ENCODE measurements at regions of chr15 and their contacts with region 1.

Region 1: GRCh38 chr15:94238539-94239118 is 7.3 kb downstream of the MCTP2 start:
- DNase-seq: no peak
- H3K4me3 Mint-ChIP-seq: peak overlapping the region; percentile 43
- H3K27ac Mint-ChIP-seq: peak overlapping the region; percentile 86
- H3K4me1 Mint-ChIP-seq: peaks cover 46% of the 10 kb centered on the region
- H3K27me3 Mint-ChIP-seq: no peaks in the 10 kb centered on the region
- CTCF ChIP-seq: no peak

Region 2: DNA sequence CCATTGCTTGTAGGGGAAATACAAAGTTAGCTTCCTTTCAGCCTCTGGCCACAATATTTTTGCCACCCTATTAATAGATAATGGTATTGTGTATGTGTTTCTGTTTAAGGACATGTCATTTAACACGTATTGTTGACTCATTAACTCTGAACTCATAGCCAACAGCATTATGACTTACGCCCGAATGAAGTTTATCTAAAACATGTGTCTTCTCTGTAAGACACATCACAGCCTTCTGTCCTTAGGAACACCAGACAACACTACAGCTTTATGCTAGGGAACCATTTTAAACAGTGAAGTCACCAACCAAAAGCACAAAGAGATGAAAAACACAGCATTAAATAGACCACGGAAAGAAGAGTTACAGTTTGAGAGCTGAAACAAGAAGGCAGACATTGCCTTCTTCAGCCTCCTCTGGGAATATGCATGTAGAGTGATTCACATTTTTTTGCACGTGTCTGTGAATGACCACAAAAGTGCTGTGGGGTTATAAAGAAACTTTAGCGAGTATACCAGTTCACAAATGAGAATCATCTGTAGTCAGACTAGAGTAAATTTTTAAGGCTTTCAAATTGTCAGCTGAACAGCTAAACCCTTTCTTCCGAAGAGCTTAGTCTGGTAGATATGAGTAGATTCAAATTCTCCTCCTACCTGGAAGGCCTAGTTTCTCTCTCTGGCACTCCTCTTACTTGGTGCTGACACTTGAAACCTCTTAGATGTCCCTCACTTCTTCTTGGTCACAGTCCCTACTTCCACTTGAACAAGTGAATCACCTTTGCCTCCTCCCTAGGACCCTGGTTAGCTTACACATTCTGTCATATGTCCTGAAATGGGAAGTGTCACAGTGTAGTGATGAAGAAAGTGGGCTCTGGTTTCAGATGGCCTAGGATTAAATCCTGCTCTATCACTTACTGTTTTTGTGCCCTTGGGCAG is 25.0 kb after region 1 on chr15:
- CTCF ChIA-PET with region 1: interaction called, 3 read pairs
- POLR2A ChIA-PET with region 1: interaction called, 28 read pairs
- intact Hi-C with region 1: no loop called
- DNase-seq: peak; percentile 44
- H3K4me3 Mint-ChIP-seq: no peak overlapping the region
- H3K27ac Mint-ChIP-seq: peak overlapping the region; percentile 68
- H3K4me1 Mint-ChIP-seq: peaks cover 40% of the 10 kb centered on the region
- H3K27me3 Mint-ChIP-seq: no peaks in the 10 kb centered on the region
- CTCF ChIP-seq: no peak

Region 3: DNA sequence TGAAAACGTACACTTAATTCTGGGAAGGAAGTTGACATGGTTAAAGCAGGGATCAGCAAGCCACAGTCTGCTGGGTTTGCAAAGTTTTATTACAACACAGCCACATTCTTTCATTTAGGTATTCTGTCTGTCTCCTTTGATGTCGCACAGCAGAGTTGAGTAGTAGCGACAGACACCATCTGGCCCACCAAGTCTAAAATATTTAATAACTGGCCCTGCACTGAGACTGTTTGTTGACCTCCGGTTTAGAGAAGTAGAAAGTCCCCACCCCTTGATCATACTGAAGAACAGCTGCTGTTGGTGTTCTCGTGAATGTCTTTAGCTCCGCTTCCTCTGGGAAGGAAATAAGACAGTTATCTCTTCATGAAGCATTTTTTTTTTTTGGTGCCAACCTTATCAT is 58.9 kb after region 1 on chr15:
- CTCF ChIA-PET with region 1: no interaction called
- POLR2A ChIA-PET with region 1: no interaction called
- intact Hi-C with region 1: no loop called
- DNase-seq: no peak
- H3K4me3 Mint-ChIP-seq: no peak overlapping the region
- H3K27ac Mint-ChIP-seq: no peak overlapping the region
- H3K4me1 Mint-ChIP-seq: peaks cover 10% of the 10 kb centered on the region
- H3K27me3 Mint-ChIP-seq: no peaks in the 10 kb centered on the region
- CTCF ChIP-seq: no peak